ENCODE measurements at regions of chr1 and their contacts with region 1.

Region 1: GRCh38 chr1:228669242-228669585 is 66.1 kb upstream of the RHOU start:
- DNase-seq: peak in 1 of 4 donors; percentile 44
- ATAC-seq: peak; percentile 76
- H3K4me3 ChIP-seq: no peak overlapping the region
- H3K27ac ChIP-seq: no peak overlapping the region
- H3K4me1 ChIP-seq: peaks cover 0 to 4% of the 10 kb centered on the region in 2 donors
- H3K27me3 ChIP-seq: no peaks in the 10 kb centered on the region
- CTCF ChIP-seq: no peak

Region 2: GRCh38 chr1:228387321-228387720 is 281.9 kb before region 1 on chr1:
- intact Hi-C with region 1: no loop called
- DNase-seq: peak in 1 of 4 donors; percentile 6
- ATAC-seq: no peak
- H3K4me3 ChIP-seq: no peak overlapping the region
- H3K27ac ChIP-seq: no peak overlapping the region
- H3K4me1 ChIP-seq: no peaks in the 10 kb centered on the region
- H3K27me3 ChIP-seq: no peaks in the 10 kb centered on the region
- CTCF ChIP-seq: no peak

Region 3: GRCh38 chr1:229227298-229227919 is 558.2 kb after region 1 on chr1:
- intact Hi-C with region 1: loop called in 1 of 2 experiments (anchors 10 kb)
- DNase-seq: peak; percentile 56 to 95 (median 78)
- ATAC-seq: peak; percentile 75
- H3K4me3 ChIP-seq: no peak overlapping the region
- H3K27ac ChIP-seq: no peak overlapping the region
- H3K4me1 ChIP-seq: peaks cover 16 to 33% of the 10 kb centered on the region in 2 donors
- H3K27me3 ChIP-seq: peaks cover 0 to 21% of the 10 kb centered on the region in 2 donors
- CTCF ChIP-seq: peak; percentile 80 to 82

Measured in left lung (tissue), 14 donors.